Caco-2 (cell line): ENCODE measurements at regions of chr5 and their contacts with region 1.

Region 1: GRCh38 chr5:35229076-35230037 is 930 bp downstream of the PRLR start:
- DNase-seq: peak; percentile 73 to 83
- H3K4me3 ChIP-seq: peak overlapping the region; percentile 45
- H3K4me3 Mint-ChIP-seq: peak overlapping the region; percentile 76
- H3K27ac Mint-ChIP-seq: no peak overlapping the region
- H3K4me1 ChIP-seq: 0 out of 2 replicates have a peak, but pooled peaks cover under 1% of the 10 kb centered on the region
- H3K4me1 Mint-ChIP-seq: peaks cover 19% of the 10 kb centered on the region
- H3K27me3 ChIP-seq: no peaks in the 10 kb centered on the region
- H3K27me3 Mint-ChIP-seq: peaks cover 6% of the 10 kb centered on the region
- CTCF ChIP-seq: peak in 1 of 2 experiments; percentile 69

Region 2: DNA sequence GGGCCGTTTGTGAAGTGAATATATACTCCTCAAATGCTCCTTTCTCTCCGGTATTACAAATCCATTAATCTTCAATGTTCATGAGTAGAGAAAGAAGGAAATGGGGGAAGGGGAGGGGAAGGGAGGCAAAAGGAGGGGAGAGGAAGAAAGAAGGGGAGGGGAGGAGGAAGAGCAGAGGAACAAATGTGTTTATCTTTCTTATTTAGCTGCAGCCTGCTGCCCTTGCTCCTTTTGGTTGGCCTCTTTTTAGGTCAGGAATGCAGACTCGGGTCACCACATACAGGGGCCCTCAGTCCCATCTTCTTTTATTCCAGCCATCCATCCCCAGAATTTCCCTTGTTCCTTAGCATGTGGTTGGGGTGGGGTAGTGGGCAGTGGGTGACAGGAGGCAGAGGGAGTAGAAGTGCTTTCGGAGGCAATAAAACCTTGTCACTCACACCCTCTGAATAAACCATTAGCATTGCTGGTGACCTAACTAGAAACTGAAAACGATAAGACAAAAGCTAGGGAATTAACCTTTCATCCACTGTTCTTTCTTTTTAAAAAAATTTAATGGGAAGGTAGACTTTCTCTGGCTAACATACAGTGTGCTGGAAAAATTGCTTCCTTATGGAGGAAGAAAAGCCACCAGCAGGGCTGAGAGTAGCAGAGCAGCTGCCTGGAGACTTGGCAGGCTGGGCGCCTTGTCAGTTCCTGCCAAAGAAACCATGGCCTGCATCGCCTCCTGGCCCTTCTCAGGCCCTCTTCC is 17.7 kb after region 1 on chr5:
- CTCF ChIA-PET with region 1: interaction called, 9 read pairs
- POLR2A ChIA-PET with region 1: no interaction called
- intact Hi-C with region 1: loop called (anchors 1 kb)
- DNase-seq: no peak
- H3K4me3 ChIP-seq: no peak overlapping the region
- H3K4me3 Mint-ChIP-seq: no peak overlapping the region
- H3K27ac Mint-ChIP-seq: no peak overlapping the region
- H3K4me1 ChIP-seq: no peaks in the 10 kb centered on the region
- H3K4me1 Mint-ChIP-seq: no peaks in the 10 kb centered on the region
- H3K27me3 ChIP-seq: no peaks in the 10 kb centered on the region
- H3K27me3 Mint-ChIP-seq: no peaks in the 10 kb centered on the region
- CTCF ChIP-seq: no peak

Region 3: GRCh38 chr5:35345222-35345621 is 115.9 kb after region 1 on chr5:
- CTCF ChIA-PET with region 1: no interaction called
- POLR2A ChIA-PET with region 1: no interaction called
- intact Hi-C with region 1: loop called (anchors 1 kb)
- DNase-seq: peak in 1 of 2 experiments; percentile 17
- H3K4me3 ChIP-seq: no peak overlapping the region
- H3K4me3 Mint-ChIP-seq: no peak overlapping the region
- H3K27ac Mint-ChIP-seq: no peak overlapping the region
- H3K4me1 ChIP-seq: no peaks in the 10 kb centered on the region
- H3K4me1 Mint-ChIP-seq: no peaks in the 10 kb centered on the region
- H3K27me3 ChIP-seq: no peaks in the 10 kb centered on the region
- H3K27me3 Mint-ChIP-seq: no peaks in the 10 kb centered on the region
- CTCF ChIP-seq: peak in 1 of 2 experiments; percentile 22

Region 4: DNA sequence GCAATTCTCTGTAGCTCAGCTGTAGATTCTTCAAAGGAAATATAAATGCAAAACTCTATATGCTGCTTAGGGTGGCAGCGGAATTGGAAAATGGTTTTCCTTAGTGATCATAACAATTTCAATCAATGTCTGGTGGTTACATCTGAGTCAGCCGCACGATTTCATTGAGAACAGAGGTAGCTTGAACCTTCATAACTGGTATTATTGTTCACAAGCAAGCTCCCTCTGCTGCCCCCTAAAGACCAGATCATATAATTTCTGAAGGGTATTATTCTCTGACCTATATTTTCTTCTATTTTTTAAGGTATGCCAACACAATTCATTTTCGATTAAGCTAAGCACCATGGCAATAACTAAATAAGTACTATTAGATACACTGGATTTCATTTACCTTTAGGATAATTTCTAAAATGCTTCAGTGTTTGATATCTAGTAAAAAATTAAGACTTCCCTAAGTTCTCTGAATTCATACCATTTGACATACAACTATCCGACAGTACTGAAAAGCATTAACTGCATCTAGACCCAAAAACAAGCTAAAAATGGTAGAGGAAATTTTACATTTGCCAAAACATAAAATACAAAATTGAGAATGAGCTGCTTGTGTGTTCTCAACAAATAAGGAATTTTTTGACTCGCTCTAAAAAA is 207.2 kb after region 1 on chr5:
- CTCF ChIA-PET with region 1: no interaction called
- POLR2A ChIA-PET with region 1: no interaction called
- intact Hi-C with region 1: loop called (anchors 1 kb)
- DNase-seq: peak in 1 of 2 experiments; percentile 47
- H3K4me3 ChIP-seq: no peak overlapping the region
- H3K4me3 Mint-ChIP-seq: no peak overlapping the region
- H3K27ac Mint-ChIP-seq: no peak overlapping the region
- H3K4me1 ChIP-seq: no peaks in the 10 kb centered on the region
- H3K4me1 Mint-ChIP-seq: no peaks in the 10 kb centered on the region
- H3K27me3 ChIP-seq: no peaks in the 10 kb centered on the region
- H3K27me3 Mint-ChIP-seq: peaks cover 10% of the 10 kb centered on the region
- CTCF ChIP-seq: peak; percentile 43 to 48

Region 5: DNA sequence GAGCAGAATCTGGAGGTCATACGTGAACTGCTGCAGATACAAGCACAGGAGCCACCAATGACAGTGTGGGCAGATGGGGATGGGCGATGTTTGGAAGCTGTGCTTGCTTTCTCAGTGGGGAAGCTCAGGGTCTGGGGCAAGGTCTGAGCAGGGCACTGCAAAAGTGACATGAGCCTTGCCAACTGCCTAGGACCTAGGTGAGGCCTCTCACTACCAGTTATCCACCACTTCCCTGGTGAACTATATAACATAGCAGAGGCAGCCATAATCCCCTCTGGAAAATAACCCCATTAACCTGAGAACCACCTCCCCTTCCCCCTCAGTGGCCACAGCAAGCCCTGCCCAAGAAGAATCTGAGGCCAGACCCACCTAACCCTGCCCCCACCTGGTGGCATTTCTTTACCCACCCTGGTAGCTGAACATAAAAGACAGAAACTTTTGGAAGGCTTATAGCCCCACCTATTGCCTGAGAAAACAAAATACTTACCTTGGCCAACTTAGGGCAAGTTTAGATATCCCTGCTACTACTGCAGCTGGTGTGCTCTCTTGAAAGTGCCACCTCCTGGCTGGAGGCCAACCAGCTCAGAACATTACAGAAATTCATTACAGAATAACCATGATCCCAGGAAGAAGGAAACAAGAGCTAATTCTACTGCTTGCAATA is 369.5 kb after region 1 on chr5:
- CTCF ChIA-PET with region 1: interaction called, 4 read pairs
- POLR2A ChIA-PET with region 1: no interaction called
- intact Hi-C with region 1: loop called (anchors 1 kb)
- DNase-seq: peak in 1 of 2 experiments; percentile 8
- H3K4me3 ChIP-seq: no peak overlapping the region
- H3K4me3 Mint-ChIP-seq: no peak overlapping the region
- H3K27ac Mint-ChIP-seq: no peak overlapping the region
- H3K4me1 ChIP-seq: no peaks in the 10 kb centered on the region
- H3K4me1 Mint-ChIP-seq: no peaks in the 10 kb centered on the region
- H3K27me3 ChIP-seq: no peaks in the 10 kb centered on the region
- H3K27me3 Mint-ChIP-seq: peaks cover 5% of the 10 kb centered on the region
- CTCF ChIP-seq: peak; percentile 13 to 24

Region 6: GRCh38 chr5:35926389-35927051 is 697.2 kb after region 1 on chr5:
- CTCF ChIA-PET with region 1: no interaction called
- POLR2A ChIA-PET with region 1: no interaction called
- intact Hi-C with region 1: loop called (anchors 5 kb)
- DNase-seq: peak in 1 of 2 experiments; percentile 69
- H3K4me3 ChIP-seq: no peak overlapping the region
- H3K4me3 Mint-ChIP-seq: no peak overlapping the region
- H3K27ac Mint-ChIP-seq: no peak overlapping the region
- H3K4me1 ChIP-seq: no peaks in the 10 kb centered on the region; the same call in 1 of the 2 replicates
- H3K4me1 Mint-ChIP-seq: peaks cover 7% of the 10 kb centered on the region
- H3K27me3 ChIP-seq: peaks cover 2% of the 10 kb centered on the region; the same call in 1 of the 2 replicates
- H3K27me3 Mint-ChIP-seq: peaks cover 22% of the 10 kb centered on the region
- CTCF ChIP-seq: peak; percentile 78 to 89